Mucosa of descending colon (tissue), 3 donors: ENCODE measurements at regions of chr3 and their contacts with region 1.

Region 1: GRCh38 chr3:42300013-42300412 is 34.0 kb upstream of the CCK start:
- DNase-seq: peak in 1 of 3 donors; percentile 60
- ATAC-seq: peak; percentile 32
- H3K4me3 ChIP-seq: no peak overlapping the region
- H3K4me1 ChIP-seq: no peaks in the 10 kb centered on the region
- CTCF ChIP-seq: no peak

Region 2: DNA sequence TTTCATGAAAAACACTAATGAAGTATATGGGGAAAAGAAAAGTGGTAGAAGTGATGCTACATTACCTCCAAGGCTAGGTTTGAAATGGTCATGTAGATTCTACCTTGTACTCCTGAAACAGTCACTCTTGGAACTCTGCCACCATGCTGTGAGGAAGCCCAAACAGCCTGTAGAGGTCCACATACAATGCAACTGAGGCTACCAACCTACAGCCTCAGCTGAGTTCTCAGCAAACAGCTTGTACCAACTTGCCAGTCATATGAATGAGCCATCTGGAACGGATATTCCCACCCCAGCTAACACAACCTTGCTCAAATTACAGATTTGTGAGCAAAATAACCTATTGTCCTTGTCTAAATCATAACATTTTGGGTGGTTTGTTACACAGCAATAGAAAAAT is 531.6 kb before region 1 on chr3:
- intact Hi-C with region 1: no loop called
- DNase-seq: no peak
- ATAC-seq: no peak
- H3K4me3 ChIP-seq: no peak overlapping the region
- H3K4me1 ChIP-seq: no peaks in the 10 kb centered on the region
- CTCF ChIP-seq: no peak

Region 3: DNA sequence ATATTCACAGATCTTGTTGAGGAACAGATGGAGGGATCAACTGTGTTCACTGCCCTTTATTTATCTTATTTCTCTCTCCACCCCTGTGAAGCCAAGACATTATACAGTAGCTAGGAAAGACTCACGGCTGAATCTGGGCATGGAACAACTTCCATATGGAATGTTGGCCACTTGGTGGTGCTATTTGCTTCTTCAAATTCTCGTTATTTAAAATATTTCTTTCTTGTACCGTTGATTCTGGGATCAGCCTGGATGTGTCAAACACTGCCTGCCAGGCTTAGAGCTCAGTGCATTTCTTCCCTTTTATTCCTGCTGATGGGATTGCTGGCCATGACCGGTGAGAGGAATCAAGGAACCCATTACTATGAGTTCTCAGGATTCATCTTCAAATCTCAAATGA is 661.6 kb after region 1 on chr3:
- intact Hi-C with region 1: loop called in 1 of 2 experiments (anchors 10 kb)
- DNase-seq: peak in 1 of 3 donors; percentile 72
- ATAC-seq: peak; percentile 65
- H3K4me3 ChIP-seq: no peak overlapping the region
- H3K4me1 ChIP-seq: no peaks in the 10 kb centered on the region
- CTCF ChIP-seq: peak; percentile 27